ENCODE measurements at regions of chr5 and their contacts with region 1.

Region 1: GRCh38 chr5:72307968-72308852 is 11.8 kb downstream of the MRPS27 start:
- DNase-seq: peak; percentile 99
- H3K4me3 ChIP-seq: peak overlapping the region; percentile 30 to 77 (median 53)
- H3K27ac ChIP-seq: peak overlapping the region; percentile 45
- H3K4me1 ChIP-seq: peaks cover 10% of the 10 kb centered on the region
- H3K27me3 ChIP-seq: no peaks in the 10 kb centered on the region
- CTCF ChIP-seq: peak; percentile 88 to 91
- POLR2A ChIP-seq: peak; percentile 98

Region 2: DNA sequence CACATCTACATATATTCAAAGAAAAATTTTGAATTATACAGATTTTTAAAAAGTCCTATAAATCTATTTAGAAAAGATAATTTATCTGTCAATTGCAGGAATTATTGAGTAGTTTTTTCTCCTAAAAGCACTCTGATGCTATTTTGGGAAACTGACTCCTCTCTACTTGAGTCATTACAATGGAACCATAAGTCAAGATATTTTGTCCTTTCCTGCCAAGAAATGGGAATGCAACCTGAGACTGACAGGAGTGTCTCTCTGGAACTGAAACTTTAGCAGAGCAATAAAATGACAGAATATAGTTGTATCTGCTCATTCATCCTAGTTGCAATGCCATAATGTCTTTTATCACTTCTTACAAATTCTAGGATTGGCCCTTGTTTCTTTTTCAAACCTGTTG is 540.5 kb before region 1 on chr5:
- CTCF ChIA-PET with region 1: interaction called, 3 read pairs
- POLR2A ChIA-PET with region 1: no interaction called
- dilution Hi-C with region 1: no loop called
- intact Hi-C with region 1: loop called (anchors 5 kb)
- DNase-seq: no peak
- H3K4me3 ChIP-seq: no peak overlapping the region
- H3K27ac ChIP-seq: no peak overlapping the region
- H3K4me1 ChIP-seq: peaks cover 24% of the 10 kb centered on the region
- H3K27me3 ChIP-seq: peaks cover 0 to 8% of the 10 kb centered on the region in 2 experiments
- CTCF ChIP-seq: no peak
- POLR2A ChIP-seq: no peak

Region 3: DNA sequence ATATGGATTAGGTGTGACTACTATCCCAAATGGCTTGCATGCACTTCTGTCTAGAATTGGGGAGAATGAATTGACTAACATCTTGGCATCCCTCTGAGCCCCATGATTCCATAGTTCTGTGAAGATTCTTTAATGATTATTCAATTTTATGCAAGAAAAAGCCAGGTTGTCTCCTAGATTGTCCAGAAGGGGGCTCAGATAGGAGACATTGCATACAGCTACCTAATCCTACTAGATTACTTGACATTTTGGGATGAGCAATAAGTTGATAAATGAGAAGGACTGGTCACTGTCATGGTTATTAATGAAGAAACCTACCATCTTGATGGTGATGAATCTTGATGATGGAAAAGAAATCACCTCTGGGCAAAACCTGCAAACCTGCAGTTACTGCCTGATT is 472.1 kb before region 1 on chr5:
- CTCF ChIA-PET with region 1: interaction called, 11 read pairs
- POLR2A ChIA-PET with region 1: no interaction called
- dilution Hi-C with region 1: no loop called
- intact Hi-C with region 1: loop called (anchors 2 kb)
- DNase-seq: peak; percentile 26
- H3K4me3 ChIP-seq: no peak overlapping the region
- H3K27ac ChIP-seq: no peak overlapping the region
- H3K4me1 ChIP-seq: no peaks in the 10 kb centered on the region
- H3K27me3 ChIP-seq: peaks cover 10 to 11% of the 10 kb centered on the region in 2 experiments
- CTCF ChIP-seq: peak in 1 of 2 donors; percentile 25
- POLR2A ChIP-seq: no peak

Region 4: GRCh38 chr5:72138943-72139521 is 169.2 kb before region 1 on chr5:
- CTCF ChIA-PET with region 1: interaction called, 11 read pairs
- POLR2A ChIA-PET with region 1: interaction called, 8 read pairs
- dilution Hi-C with region 1: no loop called
- intact Hi-C with region 1: loop called (anchors 1 kb)
- DNase-seq: no peak
- H3K4me3 ChIP-seq: no peak overlapping the region
- H3K27ac ChIP-seq: peak overlapping the region; percentile 24
- H3K4me1 ChIP-seq: peaks cover 73% of the 10 kb centered on the region
- H3K27me3 ChIP-seq: no peaks in the 10 kb centered on the region
- CTCF ChIP-seq: no peak
- POLR2A ChIP-seq: no peak

Region 5: DNA sequence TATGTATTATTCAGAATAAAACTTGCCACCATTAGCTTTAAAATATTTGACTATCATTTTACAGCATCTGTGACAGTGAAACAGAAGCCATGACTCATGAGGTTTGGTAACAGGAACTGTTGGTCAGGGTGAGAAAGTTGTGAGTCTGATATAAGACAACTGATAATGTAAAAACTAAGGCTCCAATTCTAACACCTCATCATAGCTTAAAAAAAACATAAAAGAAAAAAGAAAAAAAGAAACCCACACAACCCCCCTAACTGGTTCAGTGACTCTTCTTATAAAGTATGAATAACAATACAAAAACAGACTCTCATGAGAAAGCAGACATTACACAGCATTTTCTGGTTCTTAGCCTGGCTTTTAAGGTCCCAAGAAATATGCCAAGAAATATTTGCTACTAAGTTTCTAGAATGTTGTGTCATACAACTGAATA is 73.9 kb before region 1 on chr5:
- CTCF ChIA-PET with region 1: interaction called, 7 read pairs
- POLR2A ChIA-PET with region 1: no interaction called
- dilution Hi-C with region 1: no loop called
- intact Hi-C with region 1: loop called (anchors 2 kb)
- DNase-seq: peak; percentile 89
- H3K4me3 ChIP-seq: no peak overlapping the region
- H3K27ac ChIP-seq: peak overlapping the region; percentile 78
- H3K4me1 ChIP-seq: peaks cover 43% of the 10 kb centered on the region
- H3K27me3 ChIP-seq: no peaks in the 10 kb centered on the region
- CTCF ChIP-seq: no peak
- POLR2A ChIP-seq: no peak

Region 6: GRCh38 chr5:72319976-72320752 is 12.0 kb after region 1 on chr5 and contains the starts of genes MRPS27 and PTCD2:
- CTCF ChIA-PET with region 1: interaction called, 11 read pairs
- POLR2A ChIA-PET with region 1: interaction called, 8 read pairs
- dilution Hi-C with region 1: no loop called
- intact Hi-C with region 1: loop called (anchors 1 kb)
- DNase-seq: peak; percentile 98
- H3K4me3 ChIP-seq: peak within 1 kb of the TSS; percentile 49 to 80 (median 70)
- H3K27ac ChIP-seq: peak within 1 kb of the TSS; percentile 14
- H3K4me1 ChIP-seq: peaks cover 6% of the 10 kb centered on the region
- H3K27me3 ChIP-seq: no peaks in the 10 kb centered on the region
- CTCF ChIP-seq: peak; percentile 8 to 28
- POLR2A ChIP-seq: peak; percentile 97
- total RNA-seq, gene MRPS27: 58.0 and 67.1 TPM in 2 replicates
- total RNA-seq, gene PTCD2: 6.2 and 6.7 TPM in 2 replicates

Region 7: DNA sequence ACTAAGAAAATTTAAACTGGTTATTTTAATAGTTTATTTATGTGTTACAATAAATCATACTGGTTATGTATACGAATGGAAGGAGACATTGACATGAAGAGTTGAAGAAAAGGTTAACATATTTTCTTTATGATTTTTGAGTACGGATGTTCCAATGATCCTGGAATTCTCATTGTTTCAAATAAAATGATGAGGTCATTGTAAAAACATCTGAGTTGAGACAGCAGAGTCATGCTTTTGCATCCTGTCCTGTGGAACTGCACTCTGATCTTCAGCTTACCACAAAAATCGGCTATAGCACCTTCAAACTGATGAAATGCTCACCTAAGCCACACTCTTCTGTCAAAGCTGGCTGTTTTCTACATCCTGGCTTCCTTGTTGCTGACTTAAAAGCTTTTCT is 79.8 kb after region 1 on chr5:
- CTCF ChIA-PET with region 1: no interaction called
- POLR2A ChIA-PET with region 1: no interaction called
- dilution Hi-C with region 1: no loop called
- intact Hi-C with region 1: no loop called
- DNase-seq: peak; percentile 90
- H3K4me3 ChIP-seq: no peak overlapping the region
- H3K27ac ChIP-seq: peak overlapping the region; percentile 97
- H3K4me1 ChIP-seq: peaks cover 43% of the 10 kb centered on the region
- H3K27me3 ChIP-seq: no peaks in the 10 kb centered on the region
- CTCF ChIP-seq: no peak
- POLR2A ChIP-seq: no peak

Region 8: GRCh38 chr5:72733810-72734209 is 425.6 kb after region 1 on chr5:
- CTCF ChIA-PET with region 1: no interaction called
- POLR2A ChIA-PET with region 1: no interaction called
- dilution Hi-C with region 1: no loop called
- intact Hi-C with region 1: no loop called
- DNase-seq: no peak
- H3K4me3 ChIP-seq: no peak overlapping the region
- H3K27ac ChIP-seq: no peak overlapping the region
- H3K4me1 ChIP-seq: no peaks in the 10 kb centered on the region
- H3K27me3 ChIP-seq: no peaks in the 10 kb centered on the region
- CTCF ChIP-seq: no peak
- POLR2A ChIP-seq: no peak

Measured in endothelial cell of umbilical vein (primary cell).